GM13976 (cell line): ENCODE measurements at regions of chr1 and their contacts with region 1.

Region 1: GRCh38 chr1:160006312-160006940 is 25.4 kb downstream of the PIGM start:
- DNase-seq: peak; percentile 80
- CTCF ChIP-seq: peak; percentile 91

Region 2: GRCh38 chr1:159561497-159561896 is 444.9 kb before region 1 on chr1:
- in situ Hi-C with region 1: no loop called
- DNase-seq: no peak
- CTCF ChIP-seq: no peak

Region 3: GRCh38 chr1:159936273-159936904 is 70.0 kb before region 1 on chr1:
- in situ Hi-C with region 1: loop called (anchors 10 kb)
- DNase-seq: peak; percentile 89
- CTCF ChIP-seq: peak; percentile 94

Region 4: DNA sequence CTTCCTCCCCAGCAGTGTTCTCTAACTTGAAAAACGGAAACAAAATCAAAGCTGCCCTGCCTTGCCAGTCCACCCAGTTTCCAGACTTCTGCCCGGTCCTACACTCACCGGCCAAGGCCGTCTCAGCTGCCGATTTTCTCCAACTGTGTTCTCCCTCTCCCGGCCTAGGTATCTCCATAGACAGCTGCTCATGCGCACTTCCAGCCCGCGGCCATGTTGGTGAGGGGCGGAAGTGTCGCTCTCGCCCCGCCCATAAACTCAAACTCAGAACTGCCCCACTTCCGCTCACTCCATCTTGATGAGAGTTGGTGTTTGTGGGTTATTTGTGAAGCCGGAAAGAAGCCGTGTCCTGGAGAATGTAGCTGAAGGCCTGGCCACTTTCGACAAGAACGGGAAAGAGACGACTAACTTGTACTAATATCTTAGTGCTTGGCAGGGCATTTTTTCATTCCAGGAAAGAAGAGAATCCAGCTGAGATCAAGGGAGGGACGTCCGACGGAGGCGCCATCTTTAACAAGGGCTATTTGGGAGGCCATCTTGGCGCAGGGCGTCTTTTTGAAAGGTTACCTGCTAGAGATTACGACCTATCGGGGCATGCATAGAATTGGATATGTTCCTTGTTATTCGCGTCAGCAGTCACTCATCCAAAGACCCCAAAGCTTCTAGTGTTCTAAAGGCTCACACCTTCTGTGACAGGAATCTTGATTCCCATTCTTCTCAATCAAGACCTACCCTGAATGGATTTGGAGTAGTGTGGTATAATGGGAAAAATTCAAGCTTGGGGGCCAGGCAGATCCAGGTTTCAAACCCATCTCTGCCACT is 1039.5 kb after region 1 on chr1 and contains the start of gene USF1:
- in situ Hi-C with region 1: no loop called
- DNase-seq: peak; percentile 90
- CTCF ChIP-seq: no peak